Left cardiac atrium (tissue), 4 donors: ENCODE measurements at regions of chr17 and their contacts with region 1.

Region 1: GRCh38 chr17:29753845-29754439 is 131.2 kb upstream of the CORO6 start:
- DNase-seq: no peak
- ATAC-seq: no peak

Region 2: GRCh38 chr17:29682054-29682453 is 71.9 kb before region 1 on chr17:
- intact Hi-C with region 1: loop called in 1 of 2 experiments (anchors 10 kb)
- DNase-seq: no peak
- ATAC-seq: peak in 1 of 2 donors; percentile 36

Region 3: DNA sequence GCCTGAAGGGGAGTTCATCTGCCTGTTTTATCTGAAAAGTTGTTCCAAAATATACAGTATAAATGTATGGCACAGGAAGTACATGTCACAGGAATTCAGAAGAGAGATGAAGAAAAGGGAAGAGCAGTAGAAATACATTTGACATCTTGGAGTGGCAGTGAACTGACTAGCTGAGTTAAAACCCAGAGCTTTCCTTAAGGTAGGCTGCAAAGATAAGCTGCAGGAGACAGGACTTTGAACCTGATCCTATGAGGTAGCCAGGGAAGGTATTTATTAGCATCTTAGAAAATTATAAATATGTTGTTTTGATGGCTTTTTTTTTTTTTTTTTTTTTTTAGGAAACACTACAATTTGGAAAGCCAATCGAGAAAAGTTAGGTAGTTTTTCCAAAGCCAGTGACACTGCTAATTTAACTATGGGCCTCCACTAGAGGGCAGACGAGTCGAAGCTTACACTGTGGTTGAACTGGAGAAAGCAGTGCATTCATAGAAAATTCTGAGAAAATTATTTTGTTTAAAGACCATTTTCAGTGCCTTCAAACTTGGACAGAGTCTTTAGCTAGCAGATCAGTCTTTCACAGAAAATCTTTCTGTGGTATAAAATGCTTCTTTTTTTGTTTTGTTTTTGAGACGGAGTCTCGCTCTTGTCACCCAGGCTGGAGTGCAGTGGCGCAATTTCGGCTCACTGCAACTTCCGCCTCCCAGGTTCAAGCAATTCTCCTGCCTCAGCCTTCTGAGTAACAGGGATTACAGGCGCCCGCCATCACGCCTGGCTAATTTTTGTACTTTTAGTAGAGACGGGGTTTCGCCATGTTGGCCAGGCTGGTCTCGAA is 53.8 kb after region 1 on chr17:
- intact Hi-C with region 1: no loop called
- DNase-seq: peak; percentile 56
- ATAC-seq: peak; percentile 65 to 75